Naive thymus-derived CD8-positive, alpha-beta T cell (primary cell): ENCODE measurements at regions of chr1 and their contacts with region 1.

Region 1: GRCh38 chr1:40449684-40450494 is at the start of gene ZFP69B:
- DNase-seq: peak; percentile 74 to 89 (median 85)
- ATAC-seq: peak; percentile 77 to 81
- H3K4me3 Mint-ChIP-seq: peak within 1 kb of the TSS; percentile 89 to 96 (median 94)
- H3K27ac Mint-ChIP-seq: peak within 1 kb of the TSS; percentile 88 to 97 (median 94)
- H3K4me1 Mint-ChIP-seq: peaks cover 13 to 31% (median 20%) of the 10 kb centered on the region in 4 donors
- H3K27me3 Mint-ChIP-seq: no peaks in the 10 kb centered on the region
- polyA plus RNA-seq, gene ZFP69B: 1.9 to 4.4 (median 4.3) TPM

Region 2: GRCh38 chr1:39933956-39934941 is 515.6 kb before region 1 on chr1:
- POLR2A ChIA-PET with region 1: no interaction called
- DNase-seq: no peak
- ATAC-seq: no peak
- H3K4me3 Mint-ChIP-seq: no peak overlapping the region
- H3K27ac Mint-ChIP-seq: no peak overlapping the region
- H3K4me1 Mint-ChIP-seq: no peaks in the 10 kb centered on the region
- H3K27me3 Mint-ChIP-seq: peaks cover 0 to 5% (median 0%) of the 10 kb centered on the region in 5 donors

Region 3: DNA sequence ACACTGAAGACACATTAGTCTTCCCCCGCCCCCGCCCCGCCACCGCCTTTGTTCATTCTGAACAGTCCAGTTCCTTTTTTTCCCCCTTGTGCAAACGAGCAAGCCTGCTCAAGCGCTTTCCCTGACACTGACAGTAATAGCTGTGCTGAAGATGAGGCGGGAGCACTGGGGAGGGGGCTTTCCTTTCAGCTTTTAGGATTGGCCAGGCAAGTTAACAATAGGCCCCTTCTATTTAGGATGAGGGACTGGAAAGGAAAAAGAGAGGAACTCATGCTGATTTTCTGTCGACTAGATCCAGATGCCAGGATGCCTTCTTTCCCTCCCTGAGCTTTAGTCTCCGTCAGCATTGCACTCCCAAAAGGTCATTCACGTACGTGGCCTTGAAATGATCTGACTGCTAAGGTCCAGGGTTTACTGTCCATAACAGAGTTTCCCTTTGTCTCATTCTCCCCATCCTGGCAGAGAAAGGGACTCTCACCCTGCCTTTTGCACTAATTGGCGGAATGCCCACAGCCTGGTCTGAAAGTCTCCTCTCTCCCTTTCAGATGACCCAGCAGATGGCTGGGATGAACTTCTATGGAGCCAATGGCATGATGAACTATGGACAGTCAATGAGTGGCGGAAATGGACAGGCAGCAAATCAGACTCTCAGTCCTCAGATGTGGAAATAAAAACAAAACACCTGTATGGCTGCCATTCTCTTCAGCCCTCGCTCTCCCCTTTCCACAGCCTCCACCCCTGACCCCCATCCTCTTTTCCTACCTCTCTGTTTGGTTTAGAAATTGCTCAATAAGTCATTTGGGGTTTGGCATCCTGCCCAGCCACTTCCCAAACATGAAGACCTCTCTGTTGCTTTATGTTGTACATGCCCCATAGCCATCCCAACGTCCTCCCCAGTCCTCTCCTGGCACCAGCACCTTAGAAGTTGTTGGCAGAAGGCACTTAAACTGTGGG is 28.2 kb before region 1 on chr1:
- POLR2A ChIA-PET with region 1: no interaction called
- DNase-seq: no peak
- ATAC-seq: no peak
- H3K4me3 Mint-ChIP-seq: peak overlapping the region in 1 of 10 donors; percentile 44
- H3K27ac Mint-ChIP-seq: peak overlapping the region in 9 of 10 donors; percentile 61 to 88 (median 73)
- H3K4me1 Mint-ChIP-seq: peaks cover 21 to 48% (median 32%) of the 10 kb centered on the region in 4 donors
- H3K27me3 Mint-ChIP-seq: no peaks in the 10 kb centered on the region

Region 4: DNA sequence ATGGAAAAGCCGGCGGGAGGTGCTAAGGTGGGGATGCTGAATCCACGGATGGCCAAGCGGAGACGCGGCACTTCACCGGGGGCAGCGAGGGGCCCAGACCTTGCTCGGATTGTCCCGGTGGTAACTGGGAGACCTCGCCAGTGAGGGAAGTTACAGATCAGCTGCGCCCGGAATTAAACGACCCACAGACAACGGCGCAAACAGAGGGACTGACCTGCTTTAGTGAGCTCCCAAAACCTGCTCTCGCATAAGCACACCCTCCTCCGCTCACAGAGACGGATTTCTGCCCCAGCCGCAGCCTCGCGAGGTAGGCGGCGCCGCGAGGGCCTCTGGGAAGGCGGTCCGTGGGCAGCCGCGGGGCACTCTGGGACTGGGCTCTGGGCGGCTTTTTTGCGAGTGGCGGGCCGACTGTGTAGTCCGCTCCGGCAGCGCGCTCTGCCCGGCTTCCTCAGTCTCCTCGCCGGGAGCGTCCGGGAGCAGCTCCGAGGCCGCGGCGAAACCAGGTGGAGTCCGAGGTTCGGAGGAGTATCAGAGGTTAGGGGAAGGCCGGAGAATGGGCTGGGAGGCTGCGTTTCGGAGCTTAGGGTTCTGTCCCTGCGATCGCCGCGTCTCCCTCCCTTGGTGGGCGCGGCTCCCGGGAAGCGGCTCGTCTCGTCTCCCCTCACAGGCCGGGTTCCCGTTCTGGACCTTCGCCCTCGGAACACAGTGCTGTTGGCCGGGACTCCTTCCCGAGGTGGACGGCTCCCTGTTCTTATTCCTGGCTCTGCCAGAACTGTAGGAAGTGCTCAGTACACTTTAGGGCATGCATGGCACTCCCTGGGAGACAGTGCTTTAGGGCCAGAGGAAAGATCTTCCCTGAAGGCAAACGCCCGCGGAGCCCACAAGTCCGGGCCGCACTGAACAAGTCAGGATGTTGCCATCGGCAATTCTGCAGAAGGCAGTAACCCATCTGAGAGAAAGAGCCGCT is 58.8 kb after region 1 on chr1 and contains the start of gene EXO5:
- POLR2A ChIA-PET with region 1: interaction called, 10 read pairs
- DNase-seq: peak; percentile 57 to 83 (median 74)
- ATAC-seq: peak; percentile 97 to 99
- H3K4me3 Mint-ChIP-seq: peak within 1 kb of the TSS; percentile 84 to 95 (median 89)
- H3K27ac Mint-ChIP-seq: peak within 1 kb of the TSS; percentile 81 to 94 (median 87)
- H3K4me1 Mint-ChIP-seq: peaks cover 11 to 22% (median 12%) of the 10 kb centered on the region in 4 donors
- H3K27me3 Mint-ChIP-seq: no peaks in the 10 kb centered on the region
- polyA plus RNA-seq, gene EXO5: 4.0 to 7.8 (median 4.5) TPM